HCT116 (cell line): ENCODE measurements at regions of chr5 and their contacts with region 1.

Region 1: GRCh38 chr5:151771259-151772028 is at the start of gene G3BP1:
- DNase-seq: peak; percentile 100
- ATAC-seq: peak; percentile 86
- H3K4me3 ChIP-seq: peak within 1 kb of the TSS; percentile 79 to 97
- H3K27ac ChIP-seq: peak within 1 kb of the TSS; percentile 97
- H3K4me1 ChIP-seq: peaks cover 10 to 26% of the 10 kb centered on the region in 2 experiments; a peak in 3 of 4 replicates
- H3K27me3 ChIP-seq: no peaks in the 10 kb centered on the region
- CTCF ChIP-seq: peak in 2 of 3 experiments; percentile 58 to 64; a peak in 4 of 6 replicates
- POLR2A ChIP-seq: peak; percentile 96
- RAD21 ChIP-seq: no peak
- total RNA-seq, gene G3BP1: 296 TPM

Region 2: GRCh38 chr5:151126199-151126645 is 645.2 kb before region 1 on chr5:
- CTCF ChIA-PET with region 1: no interaction called
- POLR2A ChIA-PET with region 1: no interaction called
- RAD21 ChIA-PET with region 1: no interaction called
- intact Hi-C with region 1: no loop called
- DNase-seq: peak; percentile 38
- ATAC-seq: peak; percentile 88
- H3K4me3 ChIP-seq: no peak overlapping the region
- H3K27ac ChIP-seq: no peak overlapping the region
- H3K4me1 ChIP-seq: peaks cover 0 to 18% of the 10 kb centered on the region in 2 experiments; a peak in 2 of 4 replicates
- H3K27me3 ChIP-seq: no peaks in the 10 kb centered on the region
- CTCF ChIP-seq: peak; percentile 72 to 90 (median 84)
- POLR2A ChIP-seq: no peak
- RAD21 ChIP-seq: peak; percentile 88

Region 3: GRCh38 chr5:151659001-151659754 is 112.3 kb before region 1 on chr5:
- CTCF ChIA-PET with region 1: interaction called, 8 read pairs
- POLR2A ChIA-PET with region 1: interaction called, 5 read pairs
- RAD21 ChIA-PET with region 1: no interaction called
- intact Hi-C with region 1: loop called (anchors 1 kb)
- DNase-seq: peak; percentile 70
- ATAC-seq: peak; percentile 99
- H3K4me3 ChIP-seq: no peak overlapping the region
- H3K27ac ChIP-seq: no peak overlapping the region
- H3K4me1 ChIP-seq: peaks cover 3 to 18% of the 10 kb centered on the region in 2 experiments; a peak in 3 of 4 replicates
- H3K27me3 ChIP-seq: no peaks in the 10 kb centered on the region
- CTCF ChIP-seq: peak; percentile 80 to 97 (median 88)
- POLR2A ChIP-seq: no peak
- RAD21 ChIP-seq: peak; percentile 95

Region 4: GRCh38 chr5:151751091-151751490 is 20.4 kb before region 1 on chr5:
- CTCF ChIA-PET with region 1: interaction called, 3 read pairs
- POLR2A ChIA-PET with region 1: interaction called, 10 read pairs
- RAD21 ChIA-PET with region 1: no interaction called
- intact Hi-C with region 1: no loop called
- DNase-seq: no peak
- ATAC-seq: no peak
- H3K4me3 ChIP-seq: no peak overlapping the region
- H3K27ac ChIP-seq: no peak overlapping the region
- H3K4me1 ChIP-seq: peaks cover 9% of the 10 kb centered on the region in 2 experiments
- H3K27me3 ChIP-seq: no peaks in the 10 kb centered on the region
- CTCF ChIP-seq: no peak
- POLR2A ChIP-seq: no peak
- RAD21 ChIP-seq: no peak

Region 5: DNA sequence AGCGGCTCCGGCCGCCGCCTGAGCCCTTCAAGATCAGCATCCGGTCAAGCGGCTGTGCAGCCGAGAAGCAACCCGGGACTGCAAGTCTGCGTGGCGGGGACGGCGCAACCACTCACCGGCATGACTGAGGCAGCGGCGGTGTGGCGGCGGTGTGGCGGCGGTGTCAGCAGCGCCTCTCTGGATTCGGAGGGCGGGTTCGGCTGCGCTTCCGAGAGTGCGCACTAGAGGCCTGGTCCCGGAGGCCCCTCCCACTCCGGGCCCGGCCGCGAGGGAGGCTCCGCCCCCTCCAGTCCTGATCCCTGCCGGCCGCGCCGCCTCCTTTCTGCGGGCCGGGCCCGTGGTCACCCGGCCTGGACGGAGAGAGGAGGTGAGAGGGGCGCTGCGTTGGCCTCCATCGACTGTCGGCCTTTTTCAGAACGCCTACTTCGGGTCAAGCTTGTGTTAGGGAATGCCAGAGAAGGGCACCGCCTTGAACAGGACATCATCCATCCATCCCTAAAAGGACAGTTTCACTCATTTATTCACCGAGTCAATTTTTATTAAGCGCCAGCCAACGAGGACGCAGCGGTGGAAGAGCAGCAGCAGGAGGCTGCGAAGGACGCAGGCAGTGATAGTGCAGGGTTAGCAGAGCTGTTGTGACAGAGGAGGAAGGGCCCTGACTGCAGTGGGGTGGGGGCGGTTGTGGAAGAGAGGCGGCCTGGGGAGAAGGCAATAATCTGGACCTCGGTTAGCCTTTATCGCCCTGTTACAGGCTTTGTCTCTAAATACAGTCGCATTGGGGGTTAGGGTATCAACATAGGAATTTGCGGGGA is 12.8 kb before region 1 on chr5 and contains the start of gene ATOX1:
- CTCF ChIA-PET with region 1: interaction called, 7 read pairs
- POLR2A ChIA-PET with region 1: interaction called, 27 read pairs
- RAD21 ChIA-PET with region 1: no interaction called
- intact Hi-C with region 1: loop called (anchors 1 kb)
- DNase-seq: peak; percentile 67
- ATAC-seq: peak; percentile 99
- H3K4me3 ChIP-seq: peak within 1 kb of the TSS; percentile 93 to 98
- H3K27ac ChIP-seq: peak within 1 kb of the TSS; percentile 38; the same call in 1 of the 2 replicates
- H3K4me1 ChIP-seq: peaks cover 12 to 22% of the 10 kb centered on the region in 2 experiments
- H3K27me3 ChIP-seq: no peaks in the 10 kb centered on the region
- CTCF ChIP-seq: no peak
- POLR2A ChIP-seq: peak; percentile 68
- RAD21 ChIP-seq: no peak
- total RNA-seq, gene ATOX1: 66.2 TPM

Region 6: GRCh38 chr5:151786468-151786867 is 15.0 kb after region 1 on chr5:
- CTCF ChIA-PET with region 1: no interaction called
- POLR2A ChIA-PET with region 1: interaction called, 12 read pairs
- RAD21 ChIA-PET with region 1: no interaction called
- intact Hi-C with region 1: no loop called
- DNase-seq: no peak
- ATAC-seq: peak; percentile 65; the same call in 1 of the 2 replicates
- H3K4me3 ChIP-seq: no peak overlapping the region
- H3K27ac ChIP-seq: no peak overlapping the region
- H3K4me1 ChIP-seq: peaks cover under 1 to 2% of the 10 kb centered on the region in 2 experiments; a peak in 2 of 4 replicates
- H3K27me3 ChIP-seq: no peaks in the 10 kb centered on the region
- CTCF ChIP-seq: no peak; a peak in 1 of 6 replicates
- POLR2A ChIP-seq: no peak
- RAD21 ChIP-seq: no peak

Region 7: DNA sequence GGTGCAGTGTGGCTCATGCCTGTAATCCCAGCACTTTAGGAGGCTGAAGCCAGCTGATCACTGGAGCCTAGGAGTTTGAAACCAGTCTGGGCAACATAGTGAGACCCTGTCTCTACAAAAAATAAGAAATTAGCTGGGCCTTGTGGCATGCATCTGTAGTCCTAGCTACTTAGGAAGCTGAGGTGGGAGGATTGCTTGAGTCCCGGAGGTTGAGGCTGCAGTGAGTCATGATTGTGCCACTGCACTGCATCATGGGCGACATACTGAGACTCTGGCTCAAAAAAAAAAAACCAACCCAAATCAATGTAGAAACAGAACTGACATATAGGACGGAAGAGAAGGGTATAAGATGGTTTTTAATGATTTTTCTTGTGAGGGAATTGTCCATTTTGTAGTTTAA is 28.0 kb after region 1 on chr5:
- CTCF ChIA-PET with region 1: no interaction called
- POLR2A ChIA-PET with region 1: interaction called, 14 read pairs
- RAD21 ChIA-PET with region 1: no interaction called
- intact Hi-C with region 1: no loop called
- DNase-seq: no peak
- ATAC-seq: peak; percentile 34; the same call in 1 of the 2 replicates
- H3K4me3 ChIP-seq: no peak overlapping the region
- H3K27ac ChIP-seq: no peak overlapping the region
- H3K4me1 ChIP-seq: 0 out of 4 replicates have a peak, but pooled peaks cover 0 to 3% of the 10 kb centered on the region in 2 experiments
- H3K27me3 ChIP-seq: no peaks in the 10 kb centered on the region
- CTCF ChIP-seq: no peak
- POLR2A ChIP-seq: no peak
- RAD21 ChIP-seq: no peak